ENCODE measurements at regions of chr9 and their contacts with region 1.

Region 1: DNA sequence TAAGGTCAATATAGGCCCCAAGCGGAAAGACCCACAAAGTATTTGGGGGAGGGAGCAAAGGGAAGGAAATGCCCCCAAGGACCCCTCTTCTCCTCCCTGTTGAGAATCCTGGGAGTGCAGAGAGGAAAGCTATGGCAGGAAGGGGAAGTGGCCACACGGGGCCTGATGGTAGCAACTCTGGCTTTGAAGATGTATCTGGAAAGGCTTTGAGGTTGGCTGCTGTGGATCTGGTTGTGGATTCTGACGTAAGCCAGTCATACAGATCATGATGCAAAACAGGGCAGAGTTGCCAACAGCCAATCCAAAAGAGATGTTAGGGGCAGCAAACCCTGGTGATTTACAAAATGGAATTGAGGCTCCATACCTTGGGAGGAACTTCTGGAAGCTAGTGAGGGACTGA is 108.8 kb downstream of the PRKACG start:
- DNase-seq: no peak
- H3K4me3 ChIP-seq: no peak overlapping the region
- H3K27ac ChIP-seq: no peak overlapping the region
- H3K4me1 ChIP-seq: no peaks in the 10 kb centered on the region
- H3K27me3 ChIP-seq: no peaks in the 10 kb centered on the region
- CTCF ChIP-seq: no peak
- EP300 ChIP-seq: no peak
- POLR2A ChIP-seq: no peak

Region 2: DNA sequence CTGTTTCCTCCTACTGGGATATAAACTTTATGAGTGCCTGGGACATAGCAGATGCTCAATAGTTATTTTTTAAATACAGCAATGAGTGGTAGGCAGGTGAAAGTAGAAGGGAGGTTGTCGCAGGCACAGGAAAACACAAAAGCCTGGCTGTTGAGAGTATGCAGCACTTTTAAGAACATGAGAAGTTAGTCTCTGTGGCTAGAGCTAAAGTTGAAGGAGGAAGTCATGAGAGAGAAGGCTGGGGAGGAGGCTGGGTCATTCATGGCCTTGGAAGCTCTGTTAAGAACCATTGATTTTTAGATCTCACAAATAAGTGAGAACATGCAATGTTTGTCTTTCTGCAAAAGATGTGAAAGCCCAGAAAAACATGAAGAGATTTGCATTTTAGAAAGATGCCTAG is 17.9 kb before region 1 on chr9:
- intact Hi-C with region 1: loop called in 1 of 4 experiments (anchors 1 kb)
- DNase-seq: no peak
- H3K4me3 ChIP-seq: no peak overlapping the region
- H3K27ac ChIP-seq: no peak overlapping the region
- H3K4me1 ChIP-seq: no peaks in the 10 kb centered on the region
- H3K27me3 ChIP-seq: no peaks in the 10 kb centered on the region
- CTCF ChIP-seq: no peak
- EP300 ChIP-seq: no peak
- POLR2A ChIP-seq: no peak

Measured in ovary (tissue), 10 donors.